ENCODE measurements at regions of chr22 and their contacts with region 1.

Region 1: DNA sequence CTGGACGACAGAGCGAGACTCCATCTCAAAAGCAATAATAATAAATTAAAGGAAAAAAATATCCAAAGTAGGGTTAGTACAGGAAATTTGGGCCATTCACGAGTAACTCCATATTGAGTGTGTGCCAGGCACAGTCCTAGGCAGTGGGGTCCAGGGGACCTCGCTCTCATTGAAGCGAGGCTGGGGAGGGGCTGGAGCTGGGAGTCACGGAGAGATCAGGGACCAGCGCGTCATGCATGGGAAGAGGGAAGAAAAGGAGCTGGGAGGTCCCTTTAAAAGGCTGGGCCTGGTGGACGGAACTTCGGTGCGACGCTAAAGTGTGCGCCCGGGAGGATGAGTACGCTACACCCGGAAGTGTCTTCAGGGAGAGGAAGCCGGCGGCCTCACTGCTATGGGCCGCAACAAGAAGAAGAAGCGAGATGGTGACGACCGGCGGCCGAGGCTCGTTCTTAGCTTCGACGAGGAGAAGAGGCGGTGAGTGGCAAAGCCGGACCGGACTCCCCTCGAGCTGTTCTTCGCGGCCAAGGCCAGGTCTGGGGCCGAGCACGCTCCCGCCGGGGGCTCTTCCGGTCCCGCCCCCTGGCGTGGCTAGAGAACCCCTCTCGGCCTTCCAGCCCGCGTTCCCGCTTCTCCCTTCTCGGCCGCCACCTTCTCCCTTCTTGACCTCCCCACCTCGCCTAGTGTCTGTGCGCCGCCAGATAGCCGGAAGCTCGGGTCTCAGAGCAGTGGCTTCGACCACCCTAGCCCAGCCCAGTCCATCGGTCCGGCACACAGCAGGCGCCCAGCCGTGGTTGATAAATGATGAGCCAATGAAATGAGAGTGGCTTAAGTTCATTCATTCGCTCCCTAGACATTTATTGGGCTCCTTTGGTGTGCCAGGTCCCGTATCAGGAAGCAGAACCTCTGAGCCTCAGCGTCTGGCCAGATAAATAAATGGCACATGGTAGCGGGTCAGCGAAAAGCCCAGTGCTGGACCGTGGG is at the start of gene NOL12:
- DNase-seq: peak; percentile 84
- ATAC-seq: peak; percentile 82
- H3K4me3 Mint-ChIP-seq: peak within 1 kb of the TSS; percentile 90
- H3K27ac Mint-ChIP-seq: peak within 1 kb of the TSS; percentile 98
- H3K4me1 Mint-ChIP-seq: peaks cover 27% of the 10 kb centered on the region
- H3K27me3 Mint-ChIP-seq: no peaks in the 10 kb centered on the region
- total RNA-seq, gene NOL12: 37.1 to 42.3 TPM

Region 2: GRCh38 chr22:37508431-37508992 is 177.8 kb before region 1 on chr22:
- CTCF ChIA-PET with region 1: no interaction called
- POLR2A ChIA-PET with region 1: no interaction called
- intact Hi-C with region 1: no loop called
- DNase-seq: no peak
- ATAC-seq: no peak
- H3K4me3 Mint-ChIP-seq: no peak overlapping the region
- H3K27ac Mint-ChIP-seq: no peak overlapping the region
- H3K4me1 Mint-ChIP-seq: no peaks in the 10 kb centered on the region
- H3K27me3 Mint-ChIP-seq: no peaks in the 10 kb centered on the region

Region 3: GRCh38 chr22:37633625-37634416 is 52.5 kb before region 1 on chr22:
- CTCF ChIA-PET with region 1: interaction called, 12 read pairs
- POLR2A ChIA-PET with region 1: interaction called, 3 read pairs
- intact Hi-C with region 1: loop called in 1 of 2 experiments (anchors 1 kb)
- DNase-seq: peak; percentile 86
- ATAC-seq: peak; percentile 70
- H3K4me3 Mint-ChIP-seq: peak overlapping the region; percentile 58
- H3K27ac Mint-ChIP-seq: peak overlapping the region; percentile 93
- H3K4me1 Mint-ChIP-seq: peaks cover 56% of the 10 kb centered on the region
- H3K27me3 Mint-ChIP-seq: no peaks in the 10 kb centered on the region

Region 4: GRCh38 chr22:37745548-37746365 is 59.5 kb after region 1 on chr22:
- CTCF ChIA-PET with region 1: no interaction called
- POLR2A ChIA-PET with region 1: no interaction called
- intact Hi-C with region 1: loop called in 1 of 2 experiments (anchors 2 kb)
- DNase-seq: peak; percentile 95
- ATAC-seq: peak; percentile 91
- H3K4me3 Mint-ChIP-seq: peak overlapping the region; percentile 84
- H3K27ac Mint-ChIP-seq: peak overlapping the region; percentile 90
- H3K4me1 Mint-ChIP-seq: peaks cover 25% of the 10 kb centered on the region
- H3K27me3 Mint-ChIP-seq: no peaks in the 10 kb centered on the region

Region 5: DNA sequence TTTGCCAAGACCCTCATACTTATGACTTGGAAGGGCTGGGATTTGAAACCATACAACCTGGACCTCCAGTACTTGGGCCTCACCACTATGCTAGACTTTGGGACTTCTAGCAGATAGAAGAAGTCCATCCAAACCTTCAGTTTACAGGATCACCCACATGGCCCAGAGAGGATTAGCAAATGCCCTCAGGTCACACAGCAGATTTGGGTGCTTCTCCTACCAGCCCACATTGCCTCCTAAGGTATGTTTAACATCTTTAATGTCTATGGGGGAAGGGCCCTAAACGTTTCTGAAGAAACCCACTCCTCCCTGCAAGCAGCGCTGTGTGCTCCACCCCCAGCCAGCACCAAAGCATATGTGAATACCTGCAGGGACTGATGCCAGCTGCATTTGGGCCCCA is 104.0 kb after region 1 on chr22:
- CTCF ChIA-PET with region 1: no interaction called
- POLR2A ChIA-PET with region 1: no interaction called
- intact Hi-C with region 1: no loop called
- DNase-seq: no peak
- ATAC-seq: no peak
- H3K4me3 Mint-ChIP-seq: no peak overlapping the region
- H3K27ac Mint-ChIP-seq: no peak overlapping the region
- H3K4me1 Mint-ChIP-seq: no peaks in the 10 kb centered on the region
- H3K27me3 Mint-ChIP-seq: peaks cover 2% of the 10 kb centered on the region